ENCODE measurements at regions of chr12 and their contacts with region 1.

Region 1: DNA sequence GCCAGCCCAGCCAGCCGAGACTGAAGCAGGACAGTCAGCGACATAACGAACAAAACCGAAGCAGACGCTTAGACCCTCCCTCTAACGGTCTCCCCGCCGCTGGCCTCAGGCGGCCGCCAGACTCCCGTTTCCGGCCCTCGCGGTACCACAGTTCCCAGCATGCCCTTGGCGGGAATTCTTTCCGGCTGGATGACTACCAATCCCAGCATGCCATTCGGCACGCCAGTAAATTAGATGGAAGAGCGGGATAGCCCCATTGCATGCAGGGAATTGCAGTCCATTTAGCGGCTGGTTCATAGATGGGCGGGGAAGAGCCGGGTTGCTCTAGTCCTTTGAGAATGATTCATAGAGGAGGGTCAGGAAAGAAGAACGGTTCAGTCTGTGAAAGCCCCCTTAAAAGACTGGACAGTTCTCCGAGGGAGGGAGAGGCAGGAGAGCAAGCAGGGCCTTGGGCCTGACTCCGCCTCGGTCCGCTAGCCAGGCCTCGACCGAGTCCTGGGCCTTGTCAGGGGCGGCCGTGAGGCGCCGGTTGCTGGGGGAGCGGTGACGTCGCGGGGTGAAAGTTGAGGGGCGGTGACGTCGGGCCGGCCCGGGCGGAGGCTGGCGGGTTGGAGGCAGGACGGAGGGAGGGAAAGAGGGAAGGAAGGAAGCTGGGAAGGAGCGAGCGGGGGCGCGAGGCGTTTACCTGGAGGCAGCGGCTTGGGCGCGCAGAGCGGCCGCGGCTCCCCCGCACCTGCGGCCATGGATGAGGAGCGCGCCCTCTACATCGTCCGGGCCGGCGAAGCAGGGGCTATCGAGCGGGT is at the start of gene RIC8B:
- DNase-seq: peak; percentile 74
- ATAC-seq: peak; percentile 86
- H3K4me3 ChIP-seq: peak within 1 kb of the TSS; percentile 67 to 77 (median 70)
- H3K4me3 Mint-ChIP-seq: peak within 1 kb of the TSS; percentile 96
- H3K27ac ChIP-seq: peak within 1 kb of the TSS in 1 of 2 donors; percentile 69
- H3K27ac Mint-ChIP-seq: peak within 1 kb of the TSS; percentile 88
- H3K4me1 ChIP-seq: peaks cover 16 to 17% of the 10 kb centered on the region in 2 donors
- H3K4me1 Mint-ChIP-seq: peaks cover 27% of the 10 kb centered on the region
- H3K27me3 ChIP-seq: peaks cover 0 to 14% (median 2%) of the 10 kb centered on the region in 4 experiments
- H3K27me3 Mint-ChIP-seq: peaks cover 8% of the 10 kb centered on the region
- CTCF ChIP-seq: no peak
- total RNA-seq, gene RIC8B: 12.7 and 14.8 TPM in 2 replicates

Region 2: GRCh38 chr12:106760184-106760531 is 14.0 kb before region 1 on chr12:
- CTCF ChIA-PET with region 1: interaction called, 3 read pairs
- POLR2A ChIA-PET with region 1: no interaction called
- intact Hi-C with region 1: loop called (anchors 1 kb)
- DNase-seq: peak; percentile 78
- ATAC-seq: peak; percentile 99
- H3K4me3 ChIP-seq: peak overlapping the region in 3 of 5 experiments; percentile 5 to 31 (median 19)
- H3K4me3 Mint-ChIP-seq: peak overlapping the region; percentile 65
- H3K27ac ChIP-seq: peak overlapping the region; percentile 26 to 52
- H3K27ac Mint-ChIP-seq: peak overlapping the region; percentile 85
- H3K4me1 ChIP-seq: peaks cover 20 to 22% of the 10 kb centered on the region in 2 donors
- H3K4me1 Mint-ChIP-seq: peaks cover 23% of the 10 kb centered on the region
- H3K27me3 ChIP-seq: peaks cover 0 to 8% (median 0%) of the 10 kb centered on the region in 4 experiments
- H3K27me3 Mint-ChIP-seq: no peaks in the 10 kb centered on the region
- CTCF ChIP-seq: no peak